Activated CD8-positive, alpha-beta T cell treated with anti-CD3 and anti-CD28 coated beads for 36 hours (primary cell): ENCODE measurements at regions of chr6 and their contacts with region 1.

Region 1: GRCh38 chr6:125191916-125192609 is 38.5 kb downstream of the TPD52L1 start:
- DNase-seq: peak; percentile 79
- ATAC-seq: peak; percentile 99
- H3K4me3 Mint-ChIP-seq: no peak overlapping the region
- H3K27ac Mint-ChIP-seq: no peak overlapping the region
- H3K4me1 Mint-ChIP-seq: no peaks in the 10 kb centered on the region
- H3K27me3 Mint-ChIP-seq: no peaks in the 10 kb centered on the region
- CTCF ChIP-seq: peak; percentile 71

Region 2: DNA sequence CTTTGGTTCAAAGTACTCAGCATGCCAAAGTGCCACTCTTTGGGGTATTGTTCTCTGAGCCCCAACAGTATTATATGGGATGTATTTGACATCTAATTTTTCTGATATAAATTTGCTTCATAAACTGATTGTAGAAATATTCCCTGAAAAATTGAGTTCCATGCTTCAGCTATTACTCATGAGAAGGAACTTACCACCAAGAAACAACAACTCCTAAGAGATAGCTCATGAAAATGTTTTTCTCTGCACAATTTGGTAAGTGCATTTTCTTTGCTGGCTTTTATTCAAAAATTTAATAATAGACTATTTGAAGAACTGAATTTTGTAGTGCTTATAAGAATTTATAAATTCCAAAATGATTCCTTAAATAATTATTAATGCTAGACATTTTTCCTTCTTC is 51.3 kb before region 1 on chr6:
- CTCF ChIA-PET with region 1: no interaction called
- POLR2A ChIA-PET with region 1: no interaction called
- intact Hi-C with region 1: no loop called
- DNase-seq: no peak
- ATAC-seq: no peak
- H3K4me3 Mint-ChIP-seq: no peak overlapping the region
- H3K27ac Mint-ChIP-seq: no peak overlapping the region
- H3K4me1 Mint-ChIP-seq: no peaks in the 10 kb centered on the region
- H3K27me3 Mint-ChIP-seq: peaks cover 7% of the 10 kb centered on the region
- CTCF ChIP-seq: no peak

Region 3: DNA sequence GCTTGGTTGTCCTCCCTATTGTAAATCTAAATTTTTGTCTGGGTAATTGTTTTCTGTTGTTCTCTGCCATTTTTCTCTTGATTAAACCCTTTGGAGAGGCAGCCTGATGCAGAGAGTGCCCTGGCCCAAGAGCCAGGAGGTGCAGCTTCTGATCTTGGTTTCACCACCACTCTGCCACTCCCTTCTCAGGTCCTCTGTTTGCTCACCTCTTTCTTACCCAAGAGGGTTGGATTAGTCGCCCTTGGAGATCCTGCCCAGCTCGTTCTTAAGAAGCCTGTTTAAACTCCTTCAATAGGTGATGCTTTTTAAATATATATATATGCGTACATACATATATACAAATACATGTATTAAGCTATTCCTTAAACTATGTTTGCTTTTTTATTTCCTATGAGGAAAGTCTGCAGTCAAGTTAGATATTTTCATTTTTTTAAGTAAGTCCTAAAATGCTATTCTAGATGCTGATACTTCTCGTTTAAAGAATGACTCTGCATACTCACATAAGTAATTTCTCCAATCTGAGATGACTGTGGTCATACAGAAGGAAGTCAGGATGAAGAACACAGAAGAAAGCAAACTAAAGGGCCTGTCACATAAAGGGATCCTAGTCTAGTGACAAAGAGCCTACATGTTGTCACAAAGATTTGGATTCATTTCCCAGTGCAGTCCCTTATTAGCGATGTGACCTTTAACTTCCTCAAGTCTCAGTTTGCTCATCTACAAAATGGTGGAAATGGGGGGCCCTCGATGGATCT is 18.5 kb before region 1 on chr6:
- CTCF ChIA-PET with region 1: interaction called, 16 read pairs
- POLR2A ChIA-PET with region 1: no interaction called
- intact Hi-C with region 1: no loop called
- DNase-seq: no peak
- ATAC-seq: no peak
- H3K4me3 Mint-ChIP-seq: no peak overlapping the region
- H3K27ac Mint-ChIP-seq: no peak overlapping the region
- H3K4me1 Mint-ChIP-seq: no peaks in the 10 kb centered on the region
- H3K27me3 Mint-ChIP-seq: peaks cover 26% of the 10 kb centered on the region
- CTCF ChIP-seq: no peak

Region 4: DNA sequence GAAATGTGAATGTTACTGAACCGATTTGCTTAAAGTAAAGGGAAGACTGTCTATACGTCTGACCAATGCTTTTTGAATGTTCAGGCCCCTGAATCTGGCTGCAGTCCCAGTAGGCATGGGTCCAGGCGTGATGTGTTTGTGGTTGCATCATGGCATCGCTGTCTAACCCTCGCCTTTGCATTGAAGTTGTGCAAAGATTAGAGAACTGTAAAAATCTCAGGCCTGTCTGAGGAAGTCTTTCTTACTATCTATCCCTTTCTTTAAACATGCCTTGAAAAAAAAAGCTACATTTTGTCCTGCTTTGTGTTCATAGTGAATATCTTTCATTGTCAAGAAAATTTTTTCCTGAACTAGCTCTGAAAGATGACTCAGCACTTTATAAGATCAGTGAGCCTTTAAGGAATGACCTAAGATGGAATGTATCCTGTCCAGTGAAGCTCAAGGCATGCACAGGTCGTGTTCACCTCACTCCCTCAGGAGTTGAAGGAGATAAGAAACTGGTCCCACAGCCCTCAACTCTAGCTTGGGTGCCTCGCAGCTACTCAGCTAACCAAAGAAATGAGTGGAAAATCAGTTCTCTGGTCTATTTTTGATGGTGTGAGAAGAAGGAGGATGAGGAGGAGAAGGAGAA is 10.0 kb after region 1 on chr6:
- CTCF ChIA-PET with region 1: interaction called, 35 read pairs
- POLR2A ChIA-PET with region 1: no interaction called
- intact Hi-C with region 1: no loop called
- DNase-seq: no peak
- ATAC-seq: no peak
- H3K4me3 Mint-ChIP-seq: no peak overlapping the region
- H3K27ac Mint-ChIP-seq: no peak overlapping the region
- H3K4me1 Mint-ChIP-seq: no peaks in the 10 kb centered on the region
- H3K27me3 Mint-ChIP-seq: peaks cover 6% of the 10 kb centered on the region
- CTCF ChIP-seq: no peak

Region 5: DNA sequence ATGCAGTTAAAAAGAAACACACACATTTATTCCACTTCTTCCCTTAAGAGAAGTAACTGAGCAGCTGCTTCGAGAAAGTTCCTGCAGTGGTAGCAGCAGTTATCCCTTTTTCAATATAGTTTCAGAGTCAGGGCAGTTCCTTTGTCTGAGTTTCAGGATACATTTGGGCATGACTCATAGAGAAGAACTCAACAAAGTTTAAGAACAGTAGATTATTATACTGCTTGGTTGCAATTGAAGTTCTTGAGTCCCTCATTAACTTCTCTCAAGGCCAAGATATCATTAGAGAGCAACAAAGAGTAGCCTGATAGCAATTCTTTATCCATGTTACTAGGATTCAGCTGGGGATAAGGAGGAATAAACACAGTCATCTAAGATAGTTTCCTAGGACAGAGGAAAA is 15.9 kb after region 1 on chr6:
- CTCF ChIA-PET with region 1: interaction called, 35 read pairs
- POLR2A ChIA-PET with region 1: no interaction called
- intact Hi-C with region 1: no loop called
- DNase-seq: no peak
- ATAC-seq: no peak
- H3K4me3 Mint-ChIP-seq: no peak overlapping the region
- H3K27ac Mint-ChIP-seq: no peak overlapping the region
- H3K4me1 Mint-ChIP-seq: no peaks in the 10 kb centered on the region
- H3K27me3 Mint-ChIP-seq: peaks cover 7% of the 10 kb centered on the region
- CTCF ChIP-seq: no peak

Region 6: GRCh38 chr6:125251516-125252220 is 59.6 kb after region 1 on chr6:
- CTCF ChIA-PET with region 1: no interaction called
- POLR2A ChIA-PET with region 1: no interaction called
- intact Hi-C with region 1: no loop called
- DNase-seq: no peak
- ATAC-seq: no peak
- H3K4me3 Mint-ChIP-seq: no peak overlapping the region
- H3K27ac Mint-ChIP-seq: no peak overlapping the region
- H3K4me1 Mint-ChIP-seq: no peaks in the 10 kb centered on the region
- H3K27me3 Mint-ChIP-seq: peaks cover 8% of the 10 kb centered on the region
- CTCF ChIP-seq: no peak